Panc1 (cell line): ENCODE measurements at regions of chr5 and their contacts with region 1.

Region 1: GRCh38 chr5:180301253-180301652 is 9.4 kb upstream of the MAPK9 start:
- DNase-seq: no peak
- ATAC-seq: no peak
- H3K4me3 ChIP-seq: no peak overlapping the region
- H3K27ac ChIP-seq: no peak overlapping the region
- H3K4me1 ChIP-seq: no peaks in the 10 kb centered on the region
- H3K27me3 ChIP-seq: no peaks in the 10 kb centered on the region
- CTCF ChIP-seq: no peak

Region 2: GRCh38 chr5:180117000-180117725 is 184.1 kb before region 1 on chr5:
- CTCF ChIA-PET with region 1: no interaction called
- POLR2A ChIA-PET with region 1: no interaction called
- in situ Hi-C with region 1: no loop called
- intact Hi-C with region 1: no loop called
- DNase-seq: no peak
- ATAC-seq: peak; percentile 86
- H3K4me3 ChIP-seq: no peak overlapping the region
- H3K27ac ChIP-seq: no peak overlapping the region
- H3K4me1 ChIP-seq: no peaks in the 10 kb centered on the region
- H3K27me3 ChIP-seq: no peaks in the 10 kb centered on the region
- CTCF ChIP-seq: peak; percentile 89

Region 3: DNA sequence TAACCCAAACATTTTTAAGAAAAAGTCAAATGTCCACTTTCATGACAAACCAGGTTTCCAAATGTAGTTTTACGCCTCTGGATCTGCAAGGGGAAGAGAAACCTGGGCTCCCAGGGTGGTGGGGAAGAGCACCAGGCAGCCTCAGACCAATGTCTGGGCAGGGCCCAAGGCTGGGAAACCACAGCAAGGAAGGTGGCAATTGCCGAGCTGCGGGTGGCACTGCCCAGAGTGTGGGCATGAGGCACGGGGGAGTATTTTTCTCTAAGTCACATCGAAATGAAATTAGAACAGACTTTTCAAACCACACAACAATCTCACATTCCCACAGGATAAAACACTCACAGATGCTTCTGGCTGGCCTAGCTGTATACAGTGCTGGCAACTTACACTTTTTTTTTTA is 59.7 kb before region 1 on chr5:
- CTCF ChIA-PET with region 1: no interaction called
- POLR2A ChIA-PET with region 1: no interaction called
- in situ Hi-C with region 1: no loop called
- intact Hi-C with region 1: no loop called
- DNase-seq: no peak
- ATAC-seq: no peak
- H3K4me3 ChIP-seq: no peak overlapping the region
- H3K27ac ChIP-seq: no peak overlapping the region
- H3K4me1 ChIP-seq: no peaks in the 10 kb centered on the region
- H3K27me3 ChIP-seq: no peaks in the 10 kb centered on the region
- CTCF ChIP-seq: no peak

Region 4: DNA sequence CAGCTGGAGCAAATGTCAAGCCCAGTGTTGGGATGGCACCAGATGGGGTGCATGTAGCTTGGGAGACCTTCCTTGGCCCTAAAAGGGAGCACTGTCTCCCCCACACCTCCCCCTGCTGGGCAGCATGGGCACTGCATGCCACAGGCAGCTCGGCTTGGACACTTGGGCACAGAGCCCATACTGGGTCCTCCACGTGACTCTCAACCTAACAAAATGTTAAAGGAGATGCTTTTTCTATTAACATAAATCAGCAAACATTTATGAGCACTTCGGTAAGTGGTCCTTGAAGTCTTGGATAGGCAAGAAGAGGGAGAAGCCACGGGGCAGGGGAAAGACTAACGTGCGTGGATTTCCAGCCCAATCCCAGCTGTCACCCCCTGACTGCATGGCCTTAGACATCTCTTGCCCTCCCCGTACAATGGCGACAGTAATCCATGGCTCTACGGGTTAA is 14.5 kb after region 1 on chr5:
- CTCF ChIA-PET with region 1: interaction called, 3 read pairs
- POLR2A ChIA-PET with region 1: interaction called, 14 read pairs
- in situ Hi-C with region 1: no loop called
- intact Hi-C with region 1: no loop called
- DNase-seq: no peak
- ATAC-seq: peak; percentile 86
- H3K4me3 ChIP-seq: no peak overlapping the region
- H3K27ac ChIP-seq: no peak overlapping the region
- H3K4me1 ChIP-seq: no peaks in the 10 kb centered on the region
- H3K27me3 ChIP-seq: no peaks in the 10 kb centered on the region
- CTCF ChIP-seq: peak; percentile 98

Region 5: GRCh38 chr5:180353048-180353979 is 52.1 kb after region 1 on chr5 and contains the start of gene GFPT2:
- CTCF ChIA-PET with region 1: no interaction called
- POLR2A ChIA-PET with region 1: no interaction called
- in situ Hi-C with region 1: no loop called
- intact Hi-C with region 1: no loop called
- DNase-seq: no peak
- ATAC-seq: peak; percentile 93
- H3K4me3 ChIP-seq: peak within 1 kb of the TSS; percentile 59 to 76
- H3K27ac ChIP-seq: no peak within 1 kb of the TSS
- H3K4me1 ChIP-seq: no peaks in the 10 kb centered on the region
- H3K27me3 ChIP-seq: peaks cover 5% of the 10 kb centered on the region; the same call in 1 of the 2 replicates
- CTCF ChIP-seq: no peak
- total RNA-seq, gene GFPT2: 2.1 TPM